ENCODE measurements at regions of chr16 and their contacts with region 1.

Region 1: GRCh38 chr16:53130159-53131049 is 75.6 kb downstream of the CHD9 start:
- DNase-seq: peak; percentile 97 to 99 (median 98)
- H3K4me3 ChIP-seq: peak overlapping the region; percentile 36 to 93 (median 73)
- H3K27ac ChIP-seq: peak overlapping the region; percentile 76 to 96 (median 87)
- H3K4me1 ChIP-seq: peaks cover 4 to 45% of the 10 kb centered on the region in 2 donors
- H3K27me3 ChIP-seq: no peaks in the 10 kb centered on the region
- CTCF ChIP-seq: peak in 4 of 6 experiments; percentile 5 to 96 (median 76)
- POLR2A ChIP-seq: peak in 1 of 2 donors; percentile 71

Region 2: GRCh38 chr16:53207810-53208752 is 77.7 kb after region 1 on chr16:
- intact Hi-C with region 1: loop called in 1 of 2 experiments (anchors 10 kb)
- DNase-seq: peak; percentile 48 to 80 (median 63)
- H3K4me3 ChIP-seq: peak overlapping the region; percentile 15 to 70 (median 53)
- H3K27ac ChIP-seq: peak overlapping the region; percentile 73 to 95 (median 89)
- H3K4me1 ChIP-seq: peaks cover 31 to 58% of the 10 kb centered on the region in 2 donors
- H3K27me3 ChIP-seq: no peaks in the 10 kb centered on the region
- CTCF ChIP-seq: peak; percentile 32 to 81 (median 66)
- POLR2A ChIP-seq: peak in 1 of 2 donors; percentile 58